Panc1 (cell line): ENCODE measurements at regions of chr10 and their contacts with region 1.

Region 1: DNA sequence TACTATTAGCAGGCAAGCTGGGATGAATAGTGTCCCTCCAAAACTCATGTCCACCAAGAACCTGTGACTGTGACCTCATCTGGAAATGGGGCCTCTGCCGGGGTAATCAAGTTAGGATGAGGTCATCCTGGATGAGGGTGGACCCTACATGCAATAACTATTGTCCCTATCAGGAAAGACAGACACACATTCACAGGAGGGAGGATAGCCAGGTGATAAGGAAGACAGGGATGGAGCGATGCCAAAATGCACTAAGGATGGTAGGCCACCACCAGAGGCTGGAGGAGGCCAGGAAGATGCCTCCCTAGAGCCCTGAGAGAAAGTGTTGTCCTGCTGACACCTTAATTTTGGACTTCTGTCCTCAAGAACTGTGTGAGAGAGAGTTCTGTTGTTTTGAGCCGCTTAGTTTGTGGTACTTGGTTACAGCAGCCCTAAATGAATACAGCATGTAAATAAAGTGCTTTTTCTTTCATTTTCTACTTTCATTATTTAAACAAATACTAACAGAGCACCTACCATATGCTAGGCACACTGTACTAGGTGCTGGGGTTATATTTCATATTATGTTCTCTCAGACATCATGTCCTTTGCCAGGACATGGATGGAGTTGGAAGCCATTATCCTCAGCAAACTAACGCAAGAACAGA is 111.9 kb downstream of the USP6NL start:
- DNase-seq: no peak
- ATAC-seq: no peak
- H3K4me3 ChIP-seq: no peak overlapping the region
- H3K27ac ChIP-seq: no peak overlapping the region
- H3K4me1 ChIP-seq: no peaks in the 10 kb centered on the region
- H3K27me3 ChIP-seq: no peaks in the 10 kb centered on the region
- CTCF ChIP-seq: no peak

Region 2: DNA sequence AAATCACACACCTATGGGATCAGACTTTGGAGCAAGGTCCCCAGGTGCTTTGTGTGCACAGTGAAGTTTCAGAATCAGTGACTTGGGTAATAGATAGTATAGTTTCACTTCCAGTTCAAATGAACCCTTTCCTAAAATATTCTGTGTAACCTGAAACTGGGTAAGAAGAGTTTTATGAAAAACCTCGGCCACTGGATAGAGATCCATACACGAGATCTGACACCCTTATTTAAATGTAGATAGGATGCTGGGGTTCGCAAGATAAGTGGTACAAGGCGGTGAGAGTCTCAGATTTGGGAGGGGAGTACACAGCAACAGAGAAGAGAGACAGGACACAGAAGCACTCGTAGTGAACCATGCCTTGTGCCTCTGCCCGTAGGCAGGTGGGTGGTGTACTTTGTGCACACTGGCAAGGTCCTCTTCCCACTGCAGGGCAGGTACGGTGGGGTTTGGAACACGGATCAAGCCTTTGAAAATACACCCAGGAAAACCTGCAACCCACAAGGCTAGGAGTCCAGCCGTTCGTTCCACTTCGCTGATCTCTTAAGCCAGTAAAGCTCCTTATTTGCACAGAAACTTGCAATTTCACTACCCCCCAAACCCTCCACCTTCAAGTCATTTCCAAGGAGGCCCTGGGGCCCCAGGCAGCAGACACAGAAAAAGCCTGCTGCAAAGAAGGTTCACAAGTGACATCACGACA is 50.9 kb before region 1 on chr10:
- CTCF ChIA-PET with region 1: no interaction called
- POLR2A ChIA-PET with region 1: no interaction called
- in situ Hi-C with region 1: no loop called
- intact Hi-C with region 1: no loop called
- DNase-seq: no peak
- ATAC-seq: no peak
- H3K4me3 ChIP-seq: no peak overlapping the region
- H3K27ac ChIP-seq: no peak overlapping the region
- H3K4me1 ChIP-seq: no peaks in the 10 kb centered on the region
- H3K27me3 ChIP-seq: no peaks in the 10 kb centered on the region; the same call in 1 of the 2 replicates
- CTCF ChIP-seq: no peak

Region 3: GRCh38 chr10:11472158-11472753 is 27.3 kb before region 1 on chr10:
- CTCF ChIA-PET with region 1: no interaction called
- POLR2A ChIA-PET with region 1: no interaction called
- in situ Hi-C with region 1: no loop called
- intact Hi-C with region 1: no loop called
- DNase-seq: peak; percentile 41
- ATAC-seq: peak; percentile 83; the same call in 1 of the 2 replicates
- H3K4me3 ChIP-seq: no peak overlapping the region
- H3K27ac ChIP-seq: no peak overlapping the region
- H3K4me1 ChIP-seq: no peaks in the 10 kb centered on the region
- H3K27me3 ChIP-seq: no peaks in the 10 kb centered on the region
- CTCF ChIP-seq: peak; percentile 84

Region 4: GRCh38 chr10:11819030-11819429 is 319.5 kb after region 1 on chr10:
- CTCF ChIA-PET with region 1: interaction called, 16 read pairs
- POLR2A ChIA-PET with region 1: no interaction called
- in situ Hi-C with region 1: no loop called
- intact Hi-C with region 1: no loop called
- DNase-seq: no peak
- ATAC-seq: no peak
- H3K4me3 ChIP-seq: no peak overlapping the region
- H3K27ac ChIP-seq: no peak overlapping the region
- H3K4me1 ChIP-seq: 0 out of 2 replicates have a peak, but pooled peaks cover 1% of the 10 kb centered on the region
- H3K27me3 ChIP-seq: peaks cover under 1% of the 10 kb centered on the region; the same call in 1 of the 2 replicates
- CTCF ChIP-seq: no peak